ENCODE measurements at regions of chr7 and their contacts with region 1.

Region 1: GRCh38 chr7:114865564-114865963 is 56.3 kb upstream of the MDFIC start:
- DNase-seq: peak; percentile 46
- ATAC-seq: peak; percentile 89
- H3K4me3 ChIP-seq: no peak overlapping the region
- H3K27ac ChIP-seq: no peak overlapping the region
- H3K4me1 ChIP-seq: no peaks in the 10 kb centered on the region
- H3K27me3 ChIP-seq: no peaks in the 10 kb centered on the region
- CTCF ChIP-seq: peak; percentile 71 to 82 (median 75)
- POLR2A ChIP-seq: no peak
- RAD21 ChIP-seq: peak; percentile 92

Region 2: DNA sequence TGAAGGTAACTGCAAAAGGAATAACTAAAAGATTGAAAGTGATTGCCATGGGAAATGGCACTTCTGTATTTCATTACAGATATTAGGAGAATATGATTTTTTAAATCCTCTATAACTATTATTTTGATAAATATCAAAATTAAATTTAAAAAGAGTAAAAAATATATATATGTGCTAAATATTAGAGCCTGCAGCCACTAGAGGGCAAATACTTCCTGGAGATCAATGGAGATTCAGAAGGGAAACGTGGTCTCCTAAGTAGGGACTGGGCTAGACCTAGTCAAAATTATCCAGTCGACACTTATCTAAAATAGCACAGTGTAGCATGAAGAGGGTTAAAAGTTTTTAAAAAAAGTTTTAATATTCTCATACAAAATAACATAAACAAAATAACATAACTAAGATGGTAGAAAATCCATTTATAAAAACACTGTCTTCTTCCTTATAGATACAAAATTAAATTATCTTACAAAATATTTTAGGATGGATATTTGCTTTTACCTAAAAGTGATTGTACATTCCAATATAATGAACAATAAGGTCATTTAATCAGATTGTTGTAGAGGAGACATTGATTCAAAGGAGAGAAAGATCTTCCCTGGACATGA is 490.7 kb after region 1 on chr7:
- CTCF ChIA-PET with region 1: no interaction called
- POLR2A ChIA-PET with region 1: no interaction called
- RAD21 ChIA-PET with region 1: no interaction called
- intact Hi-C with region 1: loop called (anchors 10 kb)
- DNase-seq: peak; percentile 21
- ATAC-seq: peak; percentile 63
- H3K4me3 ChIP-seq: no peak overlapping the region
- H3K27ac ChIP-seq: no peak overlapping the region
- H3K4me1 ChIP-seq: no peaks in the 10 kb centered on the region
- H3K27me3 ChIP-seq: no peaks in the 10 kb centered on the region
- CTCF ChIP-seq: peak; percentile 28 to 56 (median 45); a peak in 5 of 6 replicates
- POLR2A ChIP-seq: no peak
- RAD21 ChIP-seq: peak; percentile 51

Region 3: GRCh38 chr7:115679976-115680375 is 814.4 kb after region 1 on chr7:
- CTCF ChIA-PET with region 1: interaction called, 11 read pairs
- POLR2A ChIA-PET with region 1: no interaction called
- RAD21 ChIA-PET with region 1: no interaction called
- intact Hi-C with region 1: loop called (anchors 5 kb)
- DNase-seq: peak; percentile 38
- ATAC-seq: peak; percentile 83
- H3K4me3 ChIP-seq: no peak overlapping the region
- H3K27ac ChIP-seq: no peak overlapping the region
- H3K4me1 ChIP-seq: peaks cover 0 to 7% of the 10 kb centered on the region in 2 experiments; a peak in 1 of 4 replicates
- H3K27me3 ChIP-seq: no peaks in the 10 kb centered on the region
- CTCF ChIP-seq: peak; percentile 44 to 63 (median 62); a peak in 5 of 6 replicates
- POLR2A ChIP-seq: no peak
- RAD21 ChIP-seq: peak; percentile 47

Region 4: DNA sequence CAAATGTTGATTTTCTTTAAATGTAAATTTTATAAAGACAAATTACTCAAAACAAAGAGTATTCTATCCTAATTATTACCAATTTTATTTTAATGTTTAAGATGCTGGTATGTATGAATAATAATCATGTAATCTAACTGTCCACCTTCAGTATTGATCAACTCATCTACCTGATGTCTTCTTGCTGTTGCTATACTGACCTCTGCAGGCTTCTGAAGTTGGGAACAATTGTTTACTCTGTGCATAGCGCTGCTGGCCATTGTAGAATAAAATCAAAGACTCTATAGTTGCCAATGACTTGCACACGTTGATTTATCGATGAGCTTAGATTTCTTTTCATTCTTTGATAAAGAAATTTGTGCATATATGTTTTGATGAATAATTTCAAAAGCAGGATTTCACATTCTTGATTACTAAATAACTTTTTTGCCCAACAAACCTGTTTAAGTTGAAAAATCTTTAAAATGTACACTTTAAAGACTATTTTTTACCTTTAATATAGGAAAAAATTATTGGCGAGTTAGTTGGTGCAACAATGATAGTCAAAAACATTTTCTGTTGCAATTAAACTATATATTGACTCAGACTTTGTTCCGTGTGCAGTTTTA is 882.7 kb after region 1 on chr7:
- CTCF ChIA-PET with region 1: no interaction called
- POLR2A ChIA-PET with region 1: no interaction called
- RAD21 ChIA-PET with region 1: no interaction called
- intact Hi-C with region 1: loop called (anchors 5 kb)
- DNase-seq: peak; percentile 36
- ATAC-seq: peak; percentile 80
- H3K4me3 ChIP-seq: no peak overlapping the region
- H3K27ac ChIP-seq: no peak overlapping the region
- H3K4me1 ChIP-seq: no peaks in the 10 kb centered on the region
- H3K27me3 ChIP-seq: no peaks in the 10 kb centered on the region
- CTCF ChIP-seq: peak; percentile 39 to 67 (median 51); a peak in 5 of 6 replicates
- POLR2A ChIP-seq: no peak
- RAD21 ChIP-seq: peak; percentile 74

Measured in HCT116 (cell line).